ENCODE measurements at regions of chr15 and their contacts with region 1.

Region 1: GRCh38 chr15:40367686-40368611 is 9.9 kb downstream of the DISP2 start:
- DNase-seq: peak; percentile 81 to 94 (median 89)
- ATAC-seq: peak; percentile 39 to 80 (median 66)
- H3K4me3 ChIP-seq: peak overlapping the region in 10 of 12 donors; percentile 13 to 59 (median 46)
- H3K27ac ChIP-seq: peak overlapping the region; percentile 11 to 95 (median 86)
- H3K4me1 ChIP-seq: peaks cover 0 to 35% (median 20%) of the 10 kb centered on the region in 12 donors
- H3K27me3 ChIP-seq: no peaks in the 10 kb centered on the region
- CTCF ChIP-seq: peak; percentile 67 to 98 (median 86)
- POLR2A ChIP-seq: peak in 1 of 2 donors; percentile 23

Region 2: GRCh38 chr15:39887832-39888231 is 480.1 kb before region 1 on chr15:
- intact Hi-C with region 1: no loop called
- DNase-seq: no peak
- ATAC-seq: peak in 1 of 4 donors; percentile 52
- H3K4me3 ChIP-seq: no peak overlapping the region
- H3K27ac ChIP-seq: no peak overlapping the region
- H3K4me1 ChIP-seq: no peaks in the 10 kb centered on the region
- H3K27me3 ChIP-seq: peaks cover 0 to under 1% (median 0%) of the 10 kb centered on the region in 9 donors
- CTCF ChIP-seq: peak in 7 of 12 donors; percentile 7 to 42 (median 31)
- POLR2A ChIP-seq: no peak

Region 3: DNA sequence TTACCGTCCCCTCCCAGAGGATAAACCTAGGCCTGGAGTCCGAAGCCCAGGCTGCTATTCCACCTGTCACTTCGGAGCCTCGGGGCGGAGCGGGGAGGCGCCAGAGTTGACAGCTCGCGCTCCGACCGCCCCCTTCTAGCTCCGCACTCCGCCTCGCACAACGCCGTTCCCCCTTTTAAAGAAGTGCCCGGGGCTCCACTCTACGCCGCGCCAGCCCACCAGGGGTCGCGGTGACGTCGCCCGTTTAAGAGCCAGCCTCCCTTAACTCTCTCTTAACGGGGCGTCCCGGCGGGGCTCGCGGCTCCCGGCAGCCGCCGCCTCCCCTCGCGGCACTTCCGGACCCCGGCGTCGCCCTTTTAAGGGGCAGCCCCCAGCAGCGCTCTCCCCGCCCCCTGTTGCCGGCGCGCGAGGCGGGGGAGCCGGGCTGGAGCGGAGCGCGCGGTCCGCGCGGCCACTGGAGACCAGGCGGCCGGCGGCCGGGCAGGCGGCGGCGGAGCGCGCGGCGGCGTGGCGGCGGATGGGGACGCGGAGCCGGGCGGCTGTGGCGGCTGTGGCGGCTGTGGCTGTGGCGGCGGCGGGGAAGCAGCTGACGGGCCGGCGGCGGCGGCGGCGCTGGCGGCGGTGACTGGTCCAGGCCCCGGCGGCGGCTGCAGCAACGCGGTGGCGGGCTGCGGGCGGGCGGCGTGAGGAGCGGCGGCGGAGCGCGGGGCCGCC is 44.6 kb before region 1 on chr15 and contains the start of gene INAFM2:
- intact Hi-C with region 1: loop called in 6 of 10 experiments (anchors 2 to 5 kb)
- DNase-seq: peak; percentile 92 to 96 (median 95)
- ATAC-seq: peak; percentile 81 to 91 (median 87)
- H3K4me3 ChIP-seq: peak within 1 kb of the TSS; percentile 72 to 94 (median 82)
- H3K27ac ChIP-seq: peak within 1 kb of the TSS; percentile 69 to 99 (median 90)
- H3K4me1 ChIP-seq: peaks cover under 1 to 59% (median 41%) of the 10 kb centered on the region in 12 donors
- H3K27me3 ChIP-seq: no peaks in the 10 kb centered on the region
- CTCF ChIP-seq: peak; percentile 62 to 88 (median 75)
- POLR2A ChIP-seq: no peak
- total RNA-seq, gene INAFM2: 28.6 to 92.7 (median 40.1) TPM

Region 4: DNA sequence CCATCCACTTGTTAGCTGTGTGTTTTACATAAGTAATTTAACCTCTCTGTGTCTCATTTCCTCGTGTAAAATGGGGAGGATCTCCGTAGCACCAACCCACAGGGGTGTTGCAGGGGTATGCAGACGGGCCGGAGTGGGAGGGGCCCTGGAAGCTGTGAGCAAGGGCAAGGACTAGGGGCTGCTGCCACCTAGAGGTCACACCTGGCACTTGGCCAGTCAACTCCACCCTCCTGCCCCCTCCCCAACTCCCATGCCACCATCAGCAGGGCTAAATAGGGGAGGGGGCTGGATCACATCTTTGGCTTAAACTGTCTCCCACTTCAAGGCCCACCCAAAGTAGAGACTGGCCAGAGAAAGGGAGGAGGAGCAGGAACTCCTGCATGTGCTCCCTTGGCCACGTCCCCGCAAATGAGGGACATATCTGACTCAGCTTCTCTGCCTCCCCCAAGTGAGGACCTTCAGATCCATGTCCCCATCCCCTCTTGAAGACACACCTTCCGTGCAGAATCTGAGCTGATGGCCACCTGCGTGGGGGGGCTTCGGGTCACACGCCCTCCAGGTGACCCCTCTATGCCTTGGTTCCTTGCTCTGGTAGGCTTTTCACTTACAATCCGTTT is 29.8 kb before region 1 on chr15:
- intact Hi-C with region 1: loop called in 1 of 10 experiments (anchors 2 kb)
- DNase-seq: peak; percentile 82 to 89 (median 85)
- ATAC-seq: peak; percentile 13 to 28 (median 22)
- H3K4me3 ChIP-seq: peak overlapping the region in 9 of 12 donors; percentile 1 to 57 (median 49)
- H3K27ac ChIP-seq: peak overlapping the region in 11 of 12 donors; percentile 94 to 100 (median 97)
- H3K4me1 ChIP-seq: peaks cover 30 to 98% (median 90%) of the 10 kb centered on the region in 12 donors
- H3K27me3 ChIP-seq: no peaks in the 10 kb centered on the region
- CTCF ChIP-seq: peak; percentile 57 to 87 (median 75)
- POLR2A ChIP-seq: no peak

Region 5: DNA sequence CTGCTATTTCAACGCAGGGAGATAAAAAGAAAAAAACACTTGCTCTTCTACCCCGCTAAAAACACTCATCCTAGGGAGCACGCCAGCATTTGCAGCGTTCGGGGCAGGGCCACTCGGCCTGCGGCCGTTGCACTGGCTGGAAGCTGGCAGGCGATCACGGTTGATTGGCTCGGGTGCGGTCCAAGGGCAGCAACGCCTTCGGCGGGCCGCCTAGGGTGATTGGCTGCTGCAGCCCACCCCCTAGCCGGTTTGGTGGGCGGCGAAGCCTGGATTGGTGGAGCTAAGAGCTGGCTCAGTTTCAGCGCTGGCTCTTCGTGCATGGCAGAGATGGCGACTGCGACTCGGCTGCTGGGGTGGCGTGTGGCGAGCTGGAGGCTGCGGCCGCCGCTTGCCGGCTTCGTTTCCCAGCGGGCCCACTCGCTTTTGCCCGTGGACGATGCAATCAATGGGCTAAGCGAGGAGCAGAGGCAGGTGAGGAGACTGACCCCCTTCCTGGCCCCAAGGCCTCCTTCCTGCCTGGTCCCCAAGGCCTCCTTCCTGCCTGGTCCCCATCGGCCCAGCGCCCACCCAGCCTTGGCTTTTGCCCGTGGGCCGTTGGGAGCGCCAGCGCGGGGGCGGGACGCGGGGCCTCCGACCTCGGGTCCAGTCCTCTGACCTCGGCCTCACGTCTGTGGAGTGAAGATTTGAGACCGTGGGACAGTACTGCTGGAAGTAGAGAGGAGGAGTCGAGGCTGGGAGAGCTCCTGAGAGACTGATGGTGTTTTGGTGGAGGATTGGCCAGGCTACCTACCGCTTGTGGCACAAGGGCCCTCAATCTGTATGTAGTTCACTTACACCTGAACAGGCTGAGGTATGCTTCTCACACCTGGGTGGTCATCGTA is 37.8 kb after region 1 on chr15 and contains the start of gene IVD:
- intact Hi-C with region 1: loop called in 2 of 10 experiments (anchors 5 to 10 kb)
- DNase-seq: peak; percentile 96 to 98 (median 98)
- ATAC-seq: peak; percentile 100
- H3K4me3 ChIP-seq: peak within 1 kb of the TSS; percentile 52 to 95 (median 74)
- H3K27ac ChIP-seq: peak within 1 kb of the TSS in 11 of 12 donors; percentile 57 to 85 (median 77)
- H3K4me1 ChIP-seq: peaks cover 0 to 31% (median 17%) of the 10 kb centered on the region in 12 donors
- H3K27me3 ChIP-seq: no peaks in the 10 kb centered on the region
- CTCF ChIP-seq: peak in 1 of 12 donors; percentile 6
- POLR2A ChIP-seq: peak in 1 of 2 donors; percentile 81
- total RNA-seq, gene IVD: 72.1 to 130 (median 99.8) TPM

Region 6: GRCh38 chr15:40412095-40412759 is 44.3 kb after region 1 on chr15:
- intact Hi-C with region 1: loop called in 3 of 10 experiments (anchors 5 to 10 kb)
- DNase-seq: no peak
- ATAC-seq: peak in 1 of 4 donors; percentile 30
- H3K4me3 ChIP-seq: no peak overlapping the region
- H3K27ac ChIP-seq: no peak overlapping the region
- H3K4me1 ChIP-seq: peaks cover 0 to 10% (median under 1%) of the 10 kb centered on the region in 12 donors
- H3K27me3 ChIP-seq: no peaks in the 10 kb centered on the region
- CTCF ChIP-seq: no peak
- POLR2A ChIP-seq: no peak

Region 7: DNA sequence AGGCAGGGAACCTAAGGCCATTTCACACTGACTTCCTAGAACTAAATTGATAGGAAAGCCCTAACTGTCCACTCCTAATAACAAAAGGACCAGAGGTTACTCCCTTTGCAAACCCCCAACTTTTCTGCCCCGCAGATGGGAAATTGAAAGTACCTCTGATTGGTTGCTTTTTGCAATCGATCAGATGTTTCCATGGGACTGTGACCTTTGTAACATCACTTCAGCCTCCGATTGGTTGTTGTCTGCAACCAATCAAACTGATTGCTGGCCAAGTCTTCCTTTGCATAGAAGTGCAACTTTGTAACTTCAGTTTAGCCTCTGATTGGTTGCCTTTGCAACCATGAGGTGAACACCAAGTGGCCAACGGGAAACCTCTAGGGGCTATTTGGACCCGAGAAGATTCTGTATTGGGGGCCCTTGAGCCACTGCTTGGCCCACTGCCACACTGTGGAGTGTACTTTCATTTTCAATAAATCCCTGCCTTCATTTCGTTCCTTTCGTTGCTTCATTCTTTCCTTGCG is 214.8 kb after region 1 on chr15:
- intact Hi-C with region 1: no loop called
- DNase-seq: no peak
- ATAC-seq: peak in 1 of 4 donors; percentile 62
- H3K4me3 ChIP-seq: peak overlapping the region in 10 of 12 donors; percentile 12 to 52 (median 40)
- H3K27ac ChIP-seq: no peak overlapping the region
- H3K4me1 ChIP-seq: no peaks in the 10 kb centered on the region
- H3K27me3 ChIP-seq: no peaks in the 10 kb centered on the region
- CTCF ChIP-seq: no peak
- POLR2A ChIP-seq: no peak